Gastrocnemius medialis (tissue), 4 donors: ENCODE measurements at regions of chr5 and their contacts with region 1.

Region 1: GRCh38 chr5:124649491-124650146 is 96.8 kb downstream of the ZNF608 start:
- DNase-seq: peak in 1 of 2 donors; percentile 44
- ATAC-seq: no peak
- H3K4me3 ChIP-seq: peak overlapping the region; percentile 1 to 29 (median 19)
- H3K27ac ChIP-seq: peak overlapping the region; percentile 76 to 86 (median 83)
- H3K4me1 ChIP-seq: peaks cover 39 to 45% of the 10 kb centered on the region in 2 donors
- H3K27me3 ChIP-seq: no peaks in the 10 kb centered on the region
- CTCF ChIP-seq: no peak
- POLR2A ChIP-seq: no peak

Region 2: GRCh38 chr5:124444147-124444775 is 205.4 kb before region 1 on chr5:
- in situ Hi-C with region 1: no loop called
- intact Hi-C with region 1: loop called (anchors 2 kb)
- DNase-seq: peak; percentile 6 to 23
- ATAC-seq: peak; percentile 98 to 100
- H3K4me3 ChIP-seq: no peak overlapping the region
- H3K27ac ChIP-seq: peak overlapping the region; percentile 54 to 76 (median 63)
- H3K4me1 ChIP-seq: peaks cover 35 to 48% of the 10 kb centered on the region in 2 donors
- H3K27me3 ChIP-seq: no peaks in the 10 kb centered on the region
- CTCF ChIP-seq: no peak
- POLR2A ChIP-seq: no peak

Region 3: DNA sequence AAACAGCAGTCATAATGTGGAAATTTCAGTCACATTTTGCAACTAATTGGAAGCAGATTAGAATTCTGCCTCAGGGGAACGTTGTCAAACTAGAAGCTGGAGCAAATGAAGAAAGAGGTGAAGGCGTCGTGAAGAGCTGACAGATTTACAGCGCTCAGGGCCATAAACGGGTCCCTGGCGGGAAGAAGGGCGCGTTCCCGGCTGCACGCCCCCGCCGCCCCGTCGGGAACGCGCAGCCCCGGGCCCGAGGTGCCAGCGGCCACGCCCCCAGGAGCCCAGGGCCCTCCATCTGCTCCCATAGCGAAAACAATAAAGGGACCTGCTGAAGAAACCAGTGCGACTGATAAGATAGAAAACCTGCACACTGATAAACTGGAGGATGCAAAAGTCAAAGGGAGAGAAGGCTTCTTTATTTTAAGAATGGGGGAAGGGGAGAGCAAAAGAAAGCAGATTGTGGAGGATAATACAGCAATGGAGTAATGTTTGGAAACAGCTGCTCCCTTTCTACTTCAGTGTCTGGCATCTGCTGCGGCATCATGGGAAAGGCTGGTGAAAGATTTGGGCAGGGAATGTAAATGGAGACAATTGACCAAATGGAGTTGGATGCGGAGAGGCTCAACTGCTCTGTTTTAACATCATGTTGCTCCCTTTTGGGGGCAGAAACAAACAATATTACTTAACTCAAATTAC is 85.7 kb after region 1 on chr5:
- in situ Hi-C with region 1: loop called in 2 of 4 experiments (anchors 10 kb)
- intact Hi-C with region 1: no loop called
- DNase-seq: no peak
- ATAC-seq: peak; percentile 82 to 83
- H3K4me3 ChIP-seq: peak overlapping the region; percentile 44 to 57 (median 47)
- H3K27ac ChIP-seq: peak overlapping the region; percentile 55 to 72 (median 62)
- H3K4me1 ChIP-seq: peaks cover 57 to 72% of the 10 kb centered on the region in 2 donors
- H3K27me3 ChIP-seq: no peaks in the 10 kb centered on the region
- CTCF ChIP-seq: no peak
- POLR2A ChIP-seq: no peak

Region 4: GRCh38 chr5:124902097-124902821 is 252.6 kb after region 1 on chr5:
- in situ Hi-C with region 1: no loop called
- intact Hi-C with region 1: loop called (anchors 2 kb)
- DNase-seq: no peak
- ATAC-seq: no peak
- H3K4me3 ChIP-seq: no peak overlapping the region
- H3K27ac ChIP-seq: peak overlapping the region in 1 of 4 donors; percentile 8
- H3K4me1 ChIP-seq: peaks cover 34 to 38% of the 10 kb centered on the region in 2 donors
- H3K27me3 ChIP-seq: no peaks in the 10 kb centered on the region
- CTCF ChIP-seq: no peak
- POLR2A ChIP-seq: no peak